ENCODE measurements at regions of chr14 and their contacts with region 1.

Region 1: DNA sequence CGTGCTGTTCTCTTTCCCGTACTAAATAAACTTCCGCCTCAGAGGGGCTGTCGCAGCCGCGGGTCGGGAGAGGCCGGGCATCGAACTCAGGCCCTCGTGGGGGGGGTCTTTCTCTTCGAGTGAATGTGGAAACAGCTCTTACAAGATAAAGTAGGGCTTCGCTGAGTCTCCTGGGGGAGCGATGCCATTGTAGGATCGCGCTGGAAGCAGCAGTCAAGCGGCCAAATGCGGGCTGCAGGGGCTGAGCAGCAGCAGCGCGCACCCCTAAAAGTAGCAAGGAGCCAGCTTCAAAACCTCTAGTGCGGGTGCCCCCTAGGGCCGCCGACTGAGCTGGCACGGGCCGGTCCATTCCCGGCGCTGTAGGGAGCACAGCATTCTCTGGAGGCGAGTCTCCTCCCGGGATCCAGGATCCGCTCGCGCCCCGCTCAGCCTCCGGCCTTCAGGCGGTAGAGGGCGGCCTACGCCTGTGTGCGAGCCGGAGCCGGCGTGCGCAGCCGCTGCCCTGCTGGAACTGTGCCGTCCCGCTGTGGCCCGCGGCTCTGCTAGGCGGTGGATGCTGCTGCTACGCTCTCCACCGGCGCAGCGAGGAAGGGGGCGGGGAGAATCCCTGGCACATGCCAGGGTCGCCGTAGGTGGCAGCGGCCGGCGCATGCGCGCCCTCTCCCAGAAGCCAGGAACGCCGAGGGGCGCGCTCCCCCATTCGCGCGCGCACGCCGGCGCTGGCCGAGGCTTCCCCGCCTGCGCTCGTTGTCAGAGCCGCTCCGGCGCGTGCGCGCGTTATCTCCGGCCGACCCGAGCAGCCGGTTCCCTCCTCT is at the start of gene FUT8:
- DNase-seq: peak; percentile 95 to 98 (median 96)
- ATAC-seq: peak; percentile 93 to 96 (median 94)
- H3K4me3 ChIP-seq: peak within 1 kb of the TSS; percentile 70 to 94 (median 81)
- H3K27ac ChIP-seq: peak within 1 kb of the TSS; percentile 76 to 96 (median 90)
- H3K4me1 ChIP-seq: peaks cover 0 to 21% (median 10%) of the 10 kb centered on the region in 12 donors
- H3K27me3 ChIP-seq: no peaks in the 10 kb centered on the region
- CTCF ChIP-seq: peak; percentile 43 to 78 (median 60)
- POLR2A ChIP-seq: peak in 1 of 2 donors; percentile 83
- total RNA-seq, gene FUT8: 10.2 to 17.3 (median 12.4) TPM

Region 2: DNA sequence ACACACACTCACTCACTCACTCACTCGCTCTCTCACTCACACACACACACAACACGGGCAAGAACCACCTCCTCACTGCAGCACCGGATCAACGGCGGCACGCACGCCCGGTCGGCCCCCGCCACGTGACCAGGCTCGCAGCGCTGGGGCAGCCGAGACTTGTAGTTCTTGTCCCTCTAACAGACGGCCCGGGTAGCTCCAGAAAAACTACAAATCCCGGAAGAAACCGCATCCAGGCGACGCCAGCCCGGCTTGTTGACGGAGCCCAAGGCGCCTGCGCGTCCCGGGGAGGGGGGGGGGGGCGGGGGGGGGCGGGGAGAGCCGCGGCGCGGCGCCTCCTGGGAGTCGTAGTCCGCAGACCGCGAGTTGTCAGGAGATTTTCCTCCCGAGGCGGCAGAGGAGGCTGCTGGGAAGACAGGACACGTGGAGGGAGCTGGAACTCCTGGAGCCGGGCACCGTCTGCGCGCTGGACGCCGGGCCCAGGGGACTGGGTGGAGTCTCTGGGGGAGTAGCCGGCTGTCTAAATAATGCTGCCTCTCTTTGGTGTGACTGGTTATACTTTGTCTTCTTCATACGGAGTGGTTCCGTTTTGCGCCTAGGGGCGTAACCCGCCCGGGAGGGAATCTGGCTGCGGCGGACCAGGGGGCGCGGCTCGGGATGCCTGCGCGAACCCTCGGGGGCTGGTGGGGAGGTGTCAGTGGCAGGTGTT is 309.6 kb before region 1 on chr14 and contains the start of gene MAX:
- intact Hi-C with region 1: loop called in 2 of 10 experiments (anchors 5 kb)
- DNase-seq: peak; percentile 98 to 99 (median 99)
- ATAC-seq: peak; percentile 96 to 97 (median 97)
- H3K4me3 ChIP-seq: peak within 1 kb of the TSS; percentile 67 to 99 (median 90)
- H3K27ac ChIP-seq: peak within 1 kb of the TSS; percentile 77 to 97 (median 88)
- H3K4me1 ChIP-seq: peaks cover 7 to 47% (median 36%) of the 10 kb centered on the region in 12 donors
- H3K27me3 ChIP-seq: no peaks in the 10 kb centered on the region
- CTCF ChIP-seq: no peak
- POLR2A ChIP-seq: peak in 1 of 2 donors; percentile 66
- total RNA-seq, gene MAX: 42.3 to 102 (median 79.5) TPM

Region 3: DNA sequence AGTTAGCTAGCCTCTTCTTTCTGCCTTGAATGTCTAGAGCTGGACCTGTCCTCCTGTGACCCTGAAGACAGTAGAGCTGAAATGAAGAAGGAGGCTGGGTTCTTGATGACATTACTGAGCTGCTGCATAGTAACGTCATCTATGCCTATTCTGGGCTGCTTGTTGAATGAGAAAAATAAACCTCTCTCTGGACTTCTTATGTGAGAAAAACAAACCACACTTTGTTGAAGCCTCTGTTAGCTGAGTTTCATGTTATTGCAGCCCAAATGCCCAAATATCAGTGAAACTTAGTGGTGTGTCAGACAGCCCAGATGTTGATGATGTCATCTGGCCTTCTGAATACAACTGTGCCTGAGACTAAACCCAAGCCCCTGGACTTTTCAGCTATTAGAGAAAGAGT is 242.9 kb before region 1 on chr14:
- intact Hi-C with region 1: loop called in 8 of 10 experiments (anchors 2 to 10 kb)
- DNase-seq: no peak
- ATAC-seq: peak; percentile 28 to 83 (median 68)
- H3K4me3 ChIP-seq: no peak overlapping the region
- H3K27ac ChIP-seq: peak overlapping the region in 7 of 12 donors; percentile 32 to 54 (median 46)
- H3K4me1 ChIP-seq: peaks cover 0 to 11% (median 2%) of the 10 kb centered on the region in 12 donors
- H3K27me3 ChIP-seq: peaks cover 0 to 16% (median 6%) of the 10 kb centered on the region in 9 donors
- CTCF ChIP-seq: no peak
- POLR2A ChIP-seq: no peak

Region 4: DNA sequence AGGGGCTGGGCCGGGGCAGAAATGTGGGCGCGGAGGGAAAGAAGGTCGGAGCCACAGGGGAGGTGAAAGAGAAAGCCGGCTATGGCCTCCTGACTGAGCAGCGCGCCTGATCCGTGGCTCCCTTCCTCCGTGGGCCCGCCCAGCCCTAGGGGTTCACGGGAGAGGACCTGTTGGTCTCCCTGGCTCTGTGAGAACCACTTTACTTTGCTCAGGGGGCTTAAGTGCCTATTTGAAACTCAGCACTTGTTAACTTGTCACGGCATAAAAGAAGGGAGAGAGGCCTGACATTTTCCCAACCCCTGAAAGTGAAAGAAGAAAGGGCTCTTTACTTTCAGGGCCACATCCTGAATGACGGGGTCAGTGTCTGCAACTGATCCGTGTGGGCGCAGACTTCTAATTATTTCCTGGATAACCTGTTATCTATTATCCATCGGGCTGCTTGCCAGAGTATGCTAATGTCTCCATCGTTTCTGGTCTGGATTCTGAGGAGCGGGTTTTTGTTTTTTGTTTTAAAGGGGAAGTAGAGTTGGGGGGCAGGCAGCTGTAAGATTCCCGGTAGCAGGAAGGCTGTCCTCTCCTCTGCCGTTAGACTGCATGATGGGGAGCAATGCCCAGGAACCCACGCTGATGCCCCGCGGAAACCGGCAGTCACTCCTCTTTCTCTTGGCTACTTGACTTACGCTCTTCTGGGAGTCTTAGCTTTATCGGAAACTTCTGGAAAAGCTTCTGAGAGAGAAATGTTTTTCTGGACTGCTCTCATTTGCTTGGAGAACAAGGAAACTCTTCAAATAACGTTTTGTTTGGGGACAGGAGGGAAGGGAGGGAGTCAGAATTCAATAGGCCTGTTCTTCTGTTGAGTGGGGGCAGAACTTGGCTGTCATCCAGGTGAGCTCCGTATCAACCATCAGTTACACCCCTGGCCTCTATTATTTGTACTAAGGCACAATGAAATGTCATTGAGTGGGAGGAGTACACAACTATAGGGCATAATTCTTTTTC is 182.2 kb before region 1 on chr14:
- intact Hi-C with region 1: loop called in 7 of 10 experiments (anchors 2 to 10 kb)
- DNase-seq: peak; percentile 55 to 80 (median 73)
- ATAC-seq: peak; percentile 81 to 92 (median 89)
- H3K4me3 ChIP-seq: peak overlapping the region in 11 of 12 donors; percentile 12 to 60 (median 44)
- H3K27ac ChIP-seq: peak overlapping the region; percentile 75 to 97 (median 88)
- H3K4me1 ChIP-seq: peaks cover 0 to 41% (median 13%) of the 10 kb centered on the region in 12 donors
- H3K27me3 ChIP-seq: no peaks in the 10 kb centered on the region
- CTCF ChIP-seq: no peak
- POLR2A ChIP-seq: peak in 1 of 2 donors; percentile 28

Region 5: DNA sequence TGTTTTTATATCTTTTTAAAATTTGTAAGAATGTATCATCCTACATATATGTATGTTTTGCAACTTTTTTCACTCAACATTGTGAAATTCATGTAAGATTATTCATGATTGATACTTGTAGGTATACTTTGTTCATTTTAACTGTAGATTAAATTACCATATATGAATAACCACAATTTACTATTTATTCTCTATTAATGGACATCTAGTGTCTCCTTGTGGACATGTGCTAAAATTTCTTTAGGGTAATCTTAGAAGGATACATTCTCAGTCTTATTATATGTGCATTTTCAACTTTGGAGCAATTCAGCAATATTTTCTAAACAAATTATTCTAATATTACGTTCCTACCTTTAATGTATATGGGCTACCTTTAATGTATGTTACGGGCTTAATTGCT is 192.7 kb after region 1 on chr14:
- intact Hi-C with region 1: loop called in 2 of 10 experiments (anchors 10 kb)
- DNase-seq: no peak
- ATAC-seq: no peak
- H3K4me3 ChIP-seq: no peak overlapping the region
- H3K27ac ChIP-seq: no peak overlapping the region
- H3K4me1 ChIP-seq: peaks cover 0 to 8% (median 0%) of the 10 kb centered on the region in 12 donors
- H3K27me3 ChIP-seq: no peaks in the 10 kb centered on the region
- CTCF ChIP-seq: peak in 4 of 12 donors; percentile 16 to 32 (median 24)
- POLR2A ChIP-seq: no peak

Region 6: GRCh38 chr14:65958664-65959562 is 546.7 kb after region 1 on chr14:
- intact Hi-C with region 1: loop called (anchors 2 to 10 kb)
- DNase-seq: no peak
- ATAC-seq: peak in 2 of 4 donors; percentile 53 to 58
- H3K4me3 ChIP-seq: no peak overlapping the region
- H3K27ac ChIP-seq: no peak overlapping the region
- H3K4me1 ChIP-seq: peaks cover 0 to 6% (median 0%) of the 10 kb centered on the region in 12 donors
- H3K27me3 ChIP-seq: peaks cover 0 to 6% (median 0%) of the 10 kb centered on the region in 9 donors
- CTCF ChIP-seq: peak; percentile 31 to 62 (median 50)
- POLR2A ChIP-seq: no peak